Activated CD4-positive, alpha-beta T cell treated with anti-CD3 and anti-CD28 coated beads, Interleukin-2, amount 10 ng/mL, durations not matched to agents 24 days and 14 days (primary cell): ENCODE measurements at regions of chr11 and their contacts with region 1.

Region 1: GRCh38 chr11:118002541-118003423 is 16.6 kb downstream of the IL10RA start:
- DNase-seq: peak; percentile 88
- H3K4me3 Mint-ChIP-seq: peak overlapping the region; percentile 72
- H3K27ac Mint-ChIP-seq: peak overlapping the region; percentile 99
- H3K4me1 Mint-ChIP-seq: peaks cover 89% of the 10 kb centered on the region
- H3K27me3 Mint-ChIP-seq: no peaks in the 10 kb centered on the region

Region 2: GRCh38 chr11:117748771-117749540 is 253.8 kb before region 1 on chr11:
- intact Hi-C with region 1: no loop called
- DNase-seq: no peak
- H3K4me3 Mint-ChIP-seq: no peak overlapping the region
- H3K27ac Mint-ChIP-seq: no peak overlapping the region
- H3K4me1 Mint-ChIP-seq: no peaks in the 10 kb centered on the region
- H3K27me3 Mint-ChIP-seq: no peaks in the 10 kb centered on the region

Region 3: DNA sequence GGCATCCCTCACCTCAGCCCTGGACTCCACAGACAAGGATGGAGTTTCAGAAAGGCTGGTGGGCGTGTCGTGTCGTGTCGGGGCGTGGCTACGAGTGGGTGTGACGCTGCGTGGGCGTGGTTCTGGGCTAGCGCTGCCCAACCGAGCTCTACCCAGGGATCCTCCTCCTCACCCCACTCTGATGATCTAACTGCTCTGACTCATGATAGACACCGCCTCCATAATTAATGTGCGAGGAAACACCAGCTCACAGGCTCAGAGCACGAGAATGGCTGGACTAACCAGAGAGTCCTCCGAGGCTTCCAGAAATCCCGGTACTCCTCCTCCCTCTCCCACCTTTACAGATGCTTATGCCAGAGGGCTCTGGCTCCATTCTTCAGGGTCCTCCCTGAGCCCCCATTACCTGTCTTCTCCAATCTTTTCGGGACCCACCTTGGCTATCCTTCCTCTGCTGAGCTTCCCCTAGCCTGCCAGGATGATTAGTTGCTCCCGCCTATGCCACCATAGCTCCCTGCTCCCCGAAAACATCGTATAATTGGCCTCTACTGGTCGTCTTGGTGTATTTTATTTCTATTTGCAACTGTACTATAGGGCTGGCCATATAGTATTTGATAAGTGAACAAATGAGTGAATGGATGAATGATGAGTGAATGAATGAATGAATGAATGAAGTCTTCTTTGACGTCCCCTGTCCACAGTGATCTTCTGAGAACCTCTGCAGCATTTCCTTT is 95.4 kb before region 1 on chr11:
- intact Hi-C with region 1: loop called (anchors 1 kb)
- DNase-seq: peak; percentile 92
- H3K4me3 Mint-ChIP-seq: peak overlapping the region; percentile 72
- H3K27ac Mint-ChIP-seq: peak overlapping the region; percentile 90
- H3K4me1 Mint-ChIP-seq: peaks cover 18% of the 10 kb centered on the region
- H3K27me3 Mint-ChIP-seq: no peaks in the 10 kb centered on the region

Region 4: DNA sequence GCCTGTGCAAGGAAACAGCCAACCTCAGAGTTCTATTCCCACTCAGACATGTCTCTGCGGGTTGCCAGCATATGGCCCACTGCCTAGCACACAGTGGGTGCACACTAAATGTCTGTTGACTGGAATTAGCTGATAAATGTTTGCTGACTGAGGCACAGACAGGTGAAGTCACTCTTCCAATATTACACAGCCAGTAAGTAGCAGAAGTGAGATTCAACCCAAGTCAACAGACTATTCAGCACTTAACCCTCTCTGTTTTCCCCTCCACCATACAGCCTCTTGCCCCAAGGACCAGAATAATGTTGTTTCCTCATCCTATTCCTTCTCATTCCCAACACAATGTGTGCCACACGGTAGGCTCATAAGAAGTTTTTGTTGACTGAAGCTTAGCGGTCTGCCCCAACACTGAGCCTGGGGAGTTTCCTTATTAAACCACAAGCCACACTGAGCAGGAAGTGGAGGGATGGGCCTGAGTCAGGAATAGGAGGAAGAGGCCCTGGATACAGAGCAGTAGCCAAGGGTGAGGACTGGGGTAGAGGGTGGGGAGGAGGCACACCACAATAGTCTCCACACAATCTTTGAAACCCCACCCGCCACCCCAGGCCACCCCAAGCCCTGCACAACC is 32.3 kb before region 1 on chr11:
- intact Hi-C with region 1: loop called (anchors 1 kb)
- DNase-seq: peak; percentile 83
- H3K4me3 Mint-ChIP-seq: peak overlapping the region; percentile 60
- H3K27ac Mint-ChIP-seq: peak overlapping the region; percentile 78
- H3K4me1 Mint-ChIP-seq: peaks cover 64% of the 10 kb centered on the region
- H3K27me3 Mint-ChIP-seq: no peaks in the 10 kb centered on the region

Region 5: GRCh38 chr11:118015385-118015841 is 12.6 kb after region 1 on chr11:
- intact Hi-C with region 1: loop called (anchors 1 kb)
- DNase-seq: peak; percentile 59
- H3K4me3 Mint-ChIP-seq: peak overlapping the region; percentile 57
- H3K27ac Mint-ChIP-seq: peak overlapping the region; percentile 9
- H3K4me1 Mint-ChIP-seq: peaks cover 43% of the 10 kb centered on the region
- H3K27me3 Mint-ChIP-seq: no peaks in the 10 kb centered on the region

Region 6: DNA sequence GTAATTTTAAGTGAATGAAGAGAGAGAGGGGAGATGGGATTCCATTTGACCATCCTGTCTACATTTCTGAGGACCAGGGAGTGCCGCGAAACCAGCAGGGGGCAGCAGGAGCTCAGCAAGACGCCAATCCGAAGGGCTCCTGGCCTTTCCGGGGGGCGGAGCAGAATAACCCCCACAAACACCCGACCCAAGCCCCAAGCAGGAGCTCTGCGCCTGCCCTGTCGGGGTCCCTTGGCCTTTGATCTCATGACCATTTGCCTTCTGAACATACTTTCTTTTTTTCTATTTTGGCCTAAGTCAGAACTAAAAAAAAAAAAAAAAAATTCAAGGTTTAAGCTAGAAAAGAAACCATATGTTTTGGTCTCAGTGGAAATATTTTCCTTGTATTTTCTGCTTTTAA is 195.6 kb after region 1 on chr11:
- intact Hi-C with region 1: loop called (anchors 1 kb)
- DNase-seq: peak; percentile 94
- H3K4me3 Mint-ChIP-seq: peak overlapping the region; percentile 62
- H3K27ac Mint-ChIP-seq: peak overlapping the region; percentile 82
- H3K4me1 Mint-ChIP-seq: peaks cover 21% of the 10 kb centered on the region
- H3K27me3 Mint-ChIP-seq: no peaks in the 10 kb centered on the region

Region 7: GRCh38 chr11:118705111-118705741 is 702.4 kb after region 1 on chr11:
- intact Hi-C with region 1: no loop called
- DNase-seq: peak; percentile 74
- H3K4me3 Mint-ChIP-seq: peak overlapping the region; percentile 38
- H3K27ac Mint-ChIP-seq: no peak overlapping the region
- H3K4me1 Mint-ChIP-seq: peaks cover 20% of the 10 kb centered on the region
- H3K27me3 Mint-ChIP-seq: peaks cover 8% of the 10 kb centered on the region